Mammary epithelial cell (primary cell): ENCODE measurements at regions of chr19 and their contacts with region 1.

Region 1: GRCh38 chr19:11814029-11814699 is at the start of gene ZNF440:
- DNase-seq: peak; percentile 92
- H3K4me3 ChIP-seq: peak within 1 kb of the TSS; percentile 95 to 97 (median 97)
- H3K27ac ChIP-seq: peak within 1 kb of the TSS; percentile 72
- H3K4me1 ChIP-seq: no peaks in the 10 kb centered on the region
- H3K27me3 ChIP-seq: no peaks in the 10 kb centered on the region
- CTCF ChIP-seq: no peak
- total RNA-seq, gene ZNF440: 8.3 to 10.4 TPM

Region 2: DNA sequence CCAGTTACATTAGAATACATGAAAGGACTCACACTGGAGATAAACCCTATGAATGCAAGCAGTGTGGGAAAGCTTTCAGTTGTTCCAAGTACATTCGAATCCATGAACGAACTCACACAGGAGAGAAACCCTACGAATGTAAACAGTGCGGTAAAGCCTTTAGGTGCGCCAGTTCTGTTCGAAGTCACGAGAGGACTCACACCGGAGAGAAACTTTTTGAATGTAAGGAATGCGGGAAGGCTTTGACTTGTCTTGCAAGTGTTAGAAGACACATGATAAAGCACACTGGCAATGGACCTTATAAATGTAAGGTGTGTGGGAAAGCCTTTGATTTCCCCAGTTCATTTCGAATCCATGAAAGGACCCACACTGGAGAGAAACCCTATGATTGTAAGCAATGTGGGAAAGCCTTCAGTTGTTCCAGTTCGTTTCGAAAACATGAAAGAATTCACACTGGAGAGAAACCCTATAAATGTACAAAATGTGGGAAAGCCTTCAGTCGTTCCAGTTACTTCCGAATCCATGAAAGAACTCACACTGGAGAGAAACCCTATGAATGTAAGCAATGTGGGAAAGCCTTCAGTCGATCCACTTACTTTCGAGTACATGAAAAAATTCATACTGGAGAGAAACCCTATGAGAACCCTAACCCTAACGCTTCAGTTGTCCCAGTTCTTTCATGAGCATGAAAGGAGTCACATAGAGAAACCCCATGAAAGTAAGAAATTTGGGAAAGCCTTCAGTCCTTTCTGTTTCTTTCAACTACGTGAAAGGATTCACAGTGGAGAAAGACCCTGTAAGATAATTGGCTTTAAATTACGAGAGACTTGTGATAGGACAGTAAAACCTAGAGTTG is 196.7 kb before region 1 on chr19:
- CTCF ChIA-PET with region 1: no interaction called
- dilution Hi-C with region 1: no loop called
- in situ Hi-C with region 1: no loop called
- intact Hi-C with region 1: no loop called
- DNase-seq: no peak
- H3K4me3 ChIP-seq: no peak overlapping the region
- H3K27ac ChIP-seq: no peak overlapping the region
- H3K4me1 ChIP-seq: no peaks in the 10 kb centered on the region
- H3K27me3 ChIP-seq: no peaks in the 10 kb centered on the region
- CTCF ChIP-seq: no peak

Region 3: GRCh38 chr19:11722414-11722813 is 91.8 kb before region 1 on chr19:
- CTCF ChIA-PET with region 1: no interaction called
- dilution Hi-C with region 1: no loop called
- in situ Hi-C with region 1: no loop called
- intact Hi-C with region 1: no loop called
- DNase-seq: no peak
- H3K4me3 ChIP-seq: no peak overlapping the region
- H3K27ac ChIP-seq: no peak overlapping the region
- H3K4me1 ChIP-seq: no peaks in the 10 kb centered on the region
- H3K27me3 ChIP-seq: no peaks in the 10 kb centered on the region
- CTCF ChIP-seq: no peak

Region 4: GRCh38 chr19:11738746-11739620 is 75.2 kb before region 1 on chr19 and contains the start of gene ZNF823:
- CTCF ChIA-PET with region 1: interaction called, 4 read pairs
- dilution Hi-C with region 1: no loop called
- in situ Hi-C with region 1: no loop called
- intact Hi-C with region 1: loop called (anchors 5 kb)
- DNase-seq: peak; percentile 98
- H3K4me3 ChIP-seq: peak within 1 kb of the TSS; percentile 82 to 92 (median 91)
- H3K27ac ChIP-seq: peak within 1 kb of the TSS; percentile 61
- H3K4me1 ChIP-seq: peaks cover 20% of the 10 kb centered on the region
- H3K27me3 ChIP-seq: no peaks in the 10 kb centered on the region
- CTCF ChIP-seq: no peak
- total RNA-seq, gene ZNF823: 2.8 to 9.5 TPM

Region 5: GRCh38 chr19:11766597-11767591 is 47.3 kb before region 1 on chr19 and contains the start of gene ZNF441:
- CTCF ChIA-PET with region 1: no interaction called
- dilution Hi-C with region 1: no loop called
- in situ Hi-C with region 1: no loop called
- intact Hi-C with region 1: loop called (anchors 5 kb)
- DNase-seq: peak; percentile 92
- H3K4me3 ChIP-seq: peak within 1 kb of the TSS; percentile 46 to 59 (median 50)
- H3K27ac ChIP-seq: peak within 1 kb of the TSS; percentile 9
- H3K4me1 ChIP-seq: no peaks in the 10 kb centered on the region
- H3K27me3 ChIP-seq: no peaks in the 10 kb centered on the region
- CTCF ChIP-seq: no peak
- total RNA-seq, gene ZNF441: 3.1 to 6.7 TPM

Region 6: DNA sequence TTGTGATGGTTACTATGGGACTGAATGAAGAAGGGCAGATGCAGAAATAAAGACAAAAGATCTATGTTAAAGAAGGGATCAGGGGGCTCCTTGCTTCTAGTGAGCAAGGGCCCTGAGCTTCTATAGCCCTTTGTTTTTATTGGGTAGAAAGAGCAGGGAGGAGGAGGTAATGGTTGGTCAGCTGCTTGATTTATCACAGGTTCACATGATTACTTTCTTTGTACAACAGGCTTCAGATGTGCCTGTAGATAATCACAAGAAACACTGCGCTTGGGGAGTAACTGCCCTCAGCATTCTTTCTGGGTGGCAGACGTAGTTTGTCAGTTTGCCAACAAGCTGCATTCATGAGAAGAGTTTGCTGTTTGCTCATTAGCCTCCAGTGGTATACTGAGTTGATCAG is 29.6 kb after region 1 on chr19:
- CTCF ChIA-PET with region 1: no interaction called
- dilution Hi-C with region 1: no loop called
- in situ Hi-C with region 1: no loop called
- intact Hi-C with region 1: no loop called
- DNase-seq: no peak
- H3K4me3 ChIP-seq: no peak overlapping the region
- H3K27ac ChIP-seq: no peak overlapping the region
- H3K4me1 ChIP-seq: no peaks in the 10 kb centered on the region
- H3K27me3 ChIP-seq: no peaks in the 10 kb centered on the region
- CTCF ChIP-seq: no peak

Region 7: DNA sequence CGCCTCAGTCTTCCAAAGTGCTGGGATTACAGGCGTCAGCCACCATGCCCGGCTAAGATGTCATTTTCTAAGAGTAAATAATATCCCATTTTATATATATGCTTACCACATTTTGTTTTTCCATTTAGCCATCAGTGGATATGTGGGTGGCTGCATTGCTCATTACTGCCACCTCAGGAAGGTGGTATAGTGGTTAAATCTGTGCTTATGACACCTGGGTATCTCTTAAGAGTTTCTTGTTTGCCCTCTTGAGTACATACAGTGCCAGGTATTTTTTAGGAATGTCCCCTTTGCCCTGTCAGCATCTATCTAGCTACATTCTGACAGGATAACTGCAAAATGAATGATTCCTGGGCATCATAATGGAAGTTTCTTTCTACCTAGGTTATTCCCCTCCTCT is 88.1 kb after region 1 on chr19:
- CTCF ChIA-PET with region 1: no interaction called
- dilution Hi-C with region 1: no loop called
- in situ Hi-C with region 1: no loop called
- intact Hi-C with region 1: no loop called
- DNase-seq: no peak
- H3K4me3 ChIP-seq: no peak overlapping the region
- H3K27ac ChIP-seq: no peak overlapping the region
- H3K4me1 ChIP-seq: no peaks in the 10 kb centered on the region
- H3K27me3 ChIP-seq: no peaks in the 10 kb centered on the region
- CTCF ChIP-seq: no peak